HEK293T (cell line): ENCODE measurements at regions of chr17 and their contacts with region 1.

Region 1: DNA sequence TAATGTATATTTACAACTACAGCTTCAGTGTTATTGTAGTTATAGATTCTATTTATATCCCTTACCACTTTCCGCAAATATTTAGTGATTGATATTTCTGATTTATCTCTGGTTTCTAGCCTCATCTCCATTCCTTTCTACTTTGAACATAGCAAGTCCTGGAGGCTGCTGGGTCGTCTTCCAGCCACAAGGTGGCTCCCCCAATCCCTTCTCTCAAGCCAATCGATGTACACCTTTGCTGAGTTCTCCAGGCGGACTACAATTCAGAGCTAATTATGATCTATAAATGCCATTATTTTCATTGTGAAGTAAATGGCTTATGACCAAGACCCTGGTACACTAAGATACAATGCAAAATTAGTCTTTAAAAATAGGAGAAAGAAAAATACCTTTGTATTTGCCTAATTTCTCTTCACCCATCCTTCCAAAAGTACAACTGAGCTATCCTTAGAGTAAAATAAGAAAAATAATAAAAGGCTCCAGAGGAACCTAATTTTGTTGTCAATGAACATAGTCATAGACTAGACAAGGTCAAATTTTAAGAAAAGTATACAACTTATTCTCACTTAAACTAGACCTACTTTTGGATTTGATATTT is 122.1 kb downstream of the SKAP1 start:
- DNase-seq: peak; percentile 67

Region 2: GRCh38 chr17:48295362-48296288 is 12.3 kb before region 1 on chr17:
- CTCF ChIA-PET with region 1: interaction called, 22 read pairs
- POLR2A ChIA-PET with region 1: no interaction called
- DNase-seq: no peak

Region 3: GRCh38 chr17:48344246-48344645 is 36.3 kb after region 1 on chr17:
- CTCF ChIA-PET with region 1: no interaction called
- POLR2A ChIA-PET with region 1: no interaction called
- DNase-seq: no peak

Region 4: GRCh38 chr17:48374650-48375230 is 66.8 kb after region 1 on chr17:
- CTCF ChIA-PET with region 1: no interaction called
- POLR2A ChIA-PET with region 1: no interaction called
- DNase-seq: peak; percentile 73